GM12878 (cell line): ENCODE measurements at regions of chr3 and their contacts with region 1.

Region 1: DNA sequence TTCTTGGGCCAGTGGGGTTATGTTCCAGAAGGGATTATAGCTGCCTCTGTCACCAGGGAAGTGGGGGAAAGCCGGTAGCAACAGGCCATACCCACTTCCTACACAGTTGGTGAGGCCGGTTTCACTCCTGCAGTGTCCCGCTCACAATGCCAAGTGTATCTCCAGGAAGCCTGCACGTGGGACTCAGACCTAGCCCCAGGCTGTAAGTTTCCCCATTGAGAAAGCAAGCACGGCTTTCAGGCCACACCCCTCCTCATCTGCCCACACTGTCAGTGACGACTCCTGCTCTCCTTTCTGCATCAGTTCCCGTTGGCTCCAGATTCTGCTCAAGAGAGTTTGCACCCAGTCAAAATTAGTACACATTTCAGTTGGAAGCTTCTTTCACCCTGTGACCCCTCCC is 51.6 kb upstream of the CPOX start:
- DNase-seq: no peak
- ATAC-seq: peak; percentile 55
- H3K4me3 ChIP-seq: no peak overlapping the region
- H3K27ac ChIP-seq: no peak overlapping the region
- H3K4me1 ChIP-seq: peaks cover 31% of the 10 kb centered on the region
- H3K27me3 ChIP-seq: no peaks in the 10 kb centered on the region
- CTCF ChIP-seq: no peak
- EP300 ChIP-seq: no peak
- POLR2A ChIP-seq: no peak
- RAD21 ChIP-seq: no peak

Region 2: DNA sequence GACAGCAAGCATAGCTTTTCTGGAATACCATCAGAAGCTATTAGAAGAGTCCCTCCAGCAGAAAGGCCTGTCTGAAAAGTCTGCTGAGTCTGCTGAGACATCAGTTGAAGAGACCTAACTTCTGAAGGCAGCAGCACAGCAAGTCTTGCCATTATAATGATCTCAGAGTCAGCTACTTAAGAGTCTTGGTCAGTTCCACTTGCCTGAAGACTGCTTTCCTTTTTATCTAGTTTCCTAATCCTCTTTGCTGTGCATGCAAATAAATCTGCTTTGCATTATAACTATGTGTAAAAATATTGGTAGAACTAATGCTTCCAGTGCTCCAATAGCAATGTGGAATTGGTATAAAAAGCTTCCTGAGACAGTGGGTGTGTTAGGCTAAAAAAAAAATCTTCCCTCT is 16.7 kb before region 1 on chr3:
- CTCF ChIA-PET with region 1: interaction called, 5 read pairs
- POLR2A ChIA-PET with region 1: no interaction called
- RAD21 ChIA-PET with region 1: interaction called, 6 read pairs
- SMC1A ChIA-PET with region 1: interaction called, 13 read pairs
- in situ Hi-C with region 1: no loop called
- intact Hi-C with region 1: no loop called
- DNase-seq: no peak
- ATAC-seq: no peak
- H3K4me3 ChIP-seq: no peak overlapping the region
- H3K27ac ChIP-seq: no peak overlapping the region
- H3K4me1 ChIP-seq: no peaks in the 10 kb centered on the region
- H3K27me3 ChIP-seq: no peaks in the 10 kb centered on the region
- CTCF ChIP-seq: no peak
- EP300 ChIP-seq: no peak
- POLR2A ChIP-seq: no peak
- RAD21 ChIP-seq: no peak

Region 3: DNA sequence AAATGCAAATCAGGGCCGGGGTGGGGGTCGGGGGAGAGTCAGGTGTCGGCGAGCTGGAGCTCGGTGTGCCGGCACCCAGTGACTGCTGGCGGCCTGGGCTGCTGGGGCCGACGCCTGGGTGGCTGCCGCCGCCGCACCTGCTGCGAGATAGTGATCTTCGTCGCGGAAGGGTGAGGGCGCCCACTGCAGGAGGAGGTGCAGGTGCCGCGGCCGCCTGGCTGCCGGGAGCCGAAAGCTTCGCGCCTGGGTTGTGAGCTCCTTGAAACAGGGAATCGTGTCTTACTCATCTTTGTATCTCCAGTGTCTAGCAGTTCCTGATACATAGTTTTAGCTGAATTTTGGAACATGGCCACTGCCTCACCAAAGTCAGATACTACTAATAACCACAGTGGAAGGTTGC is 12.4 kb after region 1 on chr3:
- CTCF ChIA-PET with region 1: interaction called, 11 read pairs
- POLR2A ChIA-PET with region 1: no interaction called
- RAD21 ChIA-PET with region 1: interaction called, 4 read pairs
- SMC1A ChIA-PET with region 1: interaction called, 11 read pairs
- in situ Hi-C with region 1: no loop called
- intact Hi-C with region 1: no loop called
- DNase-seq: no peak
- ATAC-seq: peak; percentile 98
- H3K4me3 ChIP-seq: no peak overlapping the region; the same call in 1 of the 2 replicates
- H3K27ac ChIP-seq: no peak overlapping the region
- H3K4me1 ChIP-seq: peaks cover 3% of the 10 kb centered on the region
- H3K27me3 ChIP-seq: no peaks in the 10 kb centered on the region
- CTCF ChIP-seq: peak; percentile 62 to 71 (median 70)
- EP300 ChIP-seq: no peak
- POLR2A ChIP-seq: no peak
- RAD21 ChIP-seq: peak; percentile 73

Region 4: GRCh38 chr3:98705706-98706105 is 60.7 kb after region 1 on chr3:
- CTCF ChIA-PET with region 1: no interaction called
- POLR2A ChIA-PET with region 1: no interaction called
- RAD21 ChIA-PET with region 1: no interaction called
- SMC1A ChIA-PET with region 1: no interaction called
- in situ Hi-C with region 1: no loop called
- intact Hi-C with region 1: no loop called
- DNase-seq: no peak
- ATAC-seq: peak; percentile 57; the same call in 2 of the 3 replicates
- H3K4me3 ChIP-seq: no peak overlapping the region
- H3K27ac ChIP-seq: no peak overlapping the region
- H3K4me1 ChIP-seq: no peaks in the 10 kb centered on the region
- H3K27me3 ChIP-seq: no peaks in the 10 kb centered on the region
- CTCF ChIP-seq: peak; percentile 19 to 32 (median 22); a peak in 4 of 6 replicates
- EP300 ChIP-seq: no peak
- POLR2A ChIP-seq: no peak
- RAD21 ChIP-seq: peak; percentile 57

Region 5: GRCh38 chr3:98914210-98915080 is 269.4 kb after region 1 on chr3:
- CTCF ChIA-PET with region 1: no interaction called
- POLR2A ChIA-PET with region 1: no interaction called
- RAD21 ChIA-PET with region 1: no interaction called
- SMC1A ChIA-PET with region 1: no interaction called
- in situ Hi-C with region 1: no loop called
- intact Hi-C with region 1: no loop called
- DNase-seq: no peak
- ATAC-seq: no peak
- H3K4me3 ChIP-seq: no peak overlapping the region
- H3K27ac ChIP-seq: no peak overlapping the region
- H3K4me1 ChIP-seq: no peaks in the 10 kb centered on the region
- H3K27me3 ChIP-seq: no peaks in the 10 kb centered on the region
- CTCF ChIP-seq: no peak
- EP300 ChIP-seq: no peak
- POLR2A ChIP-seq: no peak
- RAD21 ChIP-seq: no peak